SK-N-SH (cell line): ENCODE measurements at regions of chr18 and their contacts with region 1.

Region 1: GRCh38 chr18:46281185-46282176 is 177.3 kb downstream of the HAUS1 start:
- DNase-seq: peak; percentile 74
- H3K4me3 ChIP-seq: no peak overlapping the region; a peak in 1 of 4 replicates
- H3K27ac ChIP-seq: no peak overlapping the region
- H3K4me1 ChIP-seq: peaks cover 12 to 21% of the 10 kb centered on the region in 2 experiments; a peak in 2 of 4 replicates
- H3K27me3 ChIP-seq: no peaks in the 10 kb centered on the region
- CTCF ChIP-seq: peak; percentile 78
- EP300 ChIP-seq: no peak
- RAD21 ChIP-seq: peak; percentile 94

Region 2: GRCh38 chr18:46148810-46149209 is 132.7 kb before region 1 on chr18:
- CTCF ChIA-PET with region 1: interaction called, 10 read pairs
- POLR2A ChIA-PET with region 1: no interaction called
- DNase-seq: peak; percentile 70
- H3K4me3 ChIP-seq: no peak overlapping the region; a peak in 1 of 4 replicates
- H3K27ac ChIP-seq: no peak overlapping the region
- H3K4me1 ChIP-seq: peaks cover 12 to 13% of the 10 kb centered on the region in 2 experiments; a peak in 1 of 4 replicates
- H3K27me3 ChIP-seq: no peaks in the 10 kb centered on the region
- CTCF ChIP-seq: peak; percentile 84
- EP300 ChIP-seq: no peak
- RAD21 ChIP-seq: peak; percentile 81

Region 3: GRCh38 chr18:46338766-46339165 is 57.3 kb after region 1 on chr18:
- CTCF ChIA-PET with region 1: interaction called, 14 read pairs
- POLR2A ChIA-PET with region 1: no interaction called
- DNase-seq: no peak
- H3K4me3 ChIP-seq: no peak overlapping the region
- H3K27ac ChIP-seq: peak overlapping the region in 1 of 2 experiments; percentile 71; a peak in 1 of 4 replicates
- H3K4me1 ChIP-seq: peaks cover 11 to 42% of the 10 kb centered on the region in 2 experiments; a peak in 3 of 4 replicates
- H3K27me3 ChIP-seq: no peaks in the 10 kb centered on the region
- CTCF ChIP-seq: no peak
- EP300 ChIP-seq: no peak
- RAD21 ChIP-seq: no peak

Region 4: GRCh38 chr18:46411867-46412690 is 130.6 kb after region 1 on chr18:
- CTCF ChIA-PET with region 1: interaction called, 18 read pairs
- POLR2A ChIA-PET with region 1: interaction called, 3 read pairs
- DNase-seq: peak; percentile 80
- H3K4me3 ChIP-seq: no peak overlapping the region
- H3K27ac ChIP-seq: peak overlapping the region; percentile 66 to 94; a peak in 3 of 4 replicates
- H3K4me1 ChIP-seq: peaks cover 7 to 83% of the 10 kb centered on the region in 2 experiments; a peak in 3 of 4 replicates
- H3K27me3 ChIP-seq: no peaks in the 10 kb centered on the region
- CTCF ChIP-seq: no peak
- EP300 ChIP-seq: peak in 1 of 2 experiments; percentile 67; a peak in 2 of 4 replicates
- RAD21 ChIP-seq: no peak

Region 5: DNA sequence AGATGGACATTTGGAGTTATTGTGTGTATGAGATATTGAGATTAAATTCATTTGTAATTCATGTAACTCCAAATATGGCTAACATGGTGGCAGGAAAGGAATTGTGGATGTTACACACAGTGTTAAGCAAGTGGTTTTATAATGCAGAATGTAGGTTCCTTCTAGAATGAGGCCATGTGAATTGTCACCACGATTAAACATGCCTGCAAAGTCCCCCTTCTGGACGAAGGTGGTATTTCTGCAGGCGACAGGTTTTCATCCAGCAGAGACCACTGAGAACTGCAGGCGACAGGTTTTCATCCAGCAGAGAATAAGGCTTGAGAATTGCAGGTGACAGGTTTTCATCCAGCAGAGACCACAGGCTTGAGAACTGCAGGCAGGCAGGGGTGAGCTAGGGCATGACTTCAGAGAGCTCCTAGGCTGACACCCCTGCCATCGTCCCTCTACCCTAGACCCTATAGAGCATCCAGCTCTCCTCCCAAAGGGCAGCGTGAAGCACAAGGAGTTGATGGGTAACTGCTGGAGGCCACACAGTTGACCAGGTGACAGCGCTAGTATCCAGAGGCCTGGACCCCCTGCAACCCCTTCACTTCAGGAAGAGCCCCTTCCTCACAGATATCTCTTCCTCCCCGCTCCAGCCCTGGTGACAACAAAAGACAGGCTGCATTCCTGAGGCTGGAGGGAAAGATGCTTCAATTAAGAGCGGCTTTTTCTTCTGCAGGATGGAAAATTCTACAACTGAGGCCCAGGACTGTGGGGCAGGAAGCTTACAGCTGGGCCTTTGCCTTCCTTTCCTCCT is 199.8 kb after region 1 on chr18:
- CTCF ChIA-PET with region 1: interaction called, 116 read pairs
- POLR2A ChIA-PET with region 1: interaction called, 5 read pairs
- DNase-seq: peak; percentile 64
- H3K4me3 ChIP-seq: no peak overlapping the region
- H3K27ac ChIP-seq: peak overlapping the region in 1 of 2 experiments; percentile 59; a peak in 2 of 4 replicates
- H3K4me1 ChIP-seq: peaks cover 7 to 9% of the 10 kb centered on the region in 2 experiments; a peak in 2 of 4 replicates
- H3K27me3 ChIP-seq: no peaks in the 10 kb centered on the region; the same call in 1 of the 2 replicates
- CTCF ChIP-seq: peak; percentile 67
- EP300 ChIP-seq: no peak
- RAD21 ChIP-seq: peak; percentile 77

Region 6: DNA sequence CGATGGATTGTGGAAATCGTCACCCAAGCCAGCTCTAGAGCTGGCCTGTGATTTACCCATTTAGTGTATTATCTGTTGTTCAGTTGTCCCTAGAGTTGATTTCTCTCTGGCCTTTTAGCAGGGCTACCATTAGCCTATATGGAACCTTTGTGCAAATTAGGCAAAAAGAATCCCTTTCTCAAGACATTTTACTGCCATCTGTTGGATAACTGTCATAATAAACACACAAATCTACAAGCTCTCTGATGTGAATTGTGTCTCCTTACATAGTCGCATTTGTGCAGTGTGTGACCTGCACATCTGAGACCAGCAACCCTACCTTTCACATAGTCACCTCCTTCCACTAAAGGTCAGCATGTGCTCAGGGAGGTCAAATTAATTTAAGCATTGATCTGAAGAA is 341.5 kb after region 1 on chr18:
- CTCF ChIA-PET with region 1: interaction called, 80 read pairs
- POLR2A ChIA-PET with region 1: interaction called, 3 read pairs
- DNase-seq: peak; percentile 27
- H3K4me3 ChIP-seq: no peak overlapping the region
- H3K27ac ChIP-seq: peak overlapping the region in 1 of 2 experiments; percentile 86; a peak in 2 of 4 replicates
- H3K4me1 ChIP-seq: peaks cover 0 to 26% of the 10 kb centered on the region in 2 experiments; a peak in 2 of 4 replicates
- H3K27me3 ChIP-seq: no peaks in the 10 kb centered on the region
- CTCF ChIP-seq: peak; percentile 37
- EP300 ChIP-seq: no peak
- RAD21 ChIP-seq: peak; percentile 63